OCI-LY7 (cell line): ENCODE measurements at regions of chr2 and their contacts with region 1.

Region 1: DNA sequence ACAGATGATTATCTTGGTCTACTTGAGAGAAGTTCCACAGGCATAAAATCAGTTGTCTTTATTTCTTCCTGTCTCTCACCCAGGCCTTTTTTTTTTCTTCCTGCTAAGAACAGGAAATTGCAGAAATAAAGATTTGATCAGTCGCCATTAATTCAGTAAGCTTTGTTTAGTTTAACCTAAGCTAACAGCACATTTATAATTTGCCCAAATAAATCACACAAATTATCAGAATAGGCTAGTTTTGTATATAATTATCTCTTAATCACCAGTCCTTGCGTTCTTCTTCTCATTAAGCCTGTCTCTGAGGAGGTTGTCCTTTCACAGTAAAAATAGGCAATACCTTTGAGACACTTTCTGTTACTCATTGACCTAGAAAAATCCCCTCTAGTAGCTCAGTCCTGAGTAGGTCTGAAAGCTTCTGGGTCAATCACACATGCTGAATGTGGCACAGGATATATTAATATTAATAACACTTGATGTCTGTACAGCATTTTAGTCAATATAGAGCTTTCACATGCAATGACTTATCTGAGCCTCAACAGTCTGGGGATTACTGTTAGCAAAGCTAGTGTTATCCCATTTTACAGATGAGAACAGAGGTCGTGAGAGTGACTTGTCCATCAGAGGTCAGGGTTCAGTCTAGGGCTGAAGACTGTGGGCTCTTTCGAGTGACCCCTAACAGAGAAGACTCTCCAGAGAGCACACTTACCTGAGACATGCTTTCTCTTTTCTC is 11.2 kb upstream of the STK17B start:
- DNase-seq: peak; percentile 60
- H3K4me3 ChIP-seq: peak overlapping the region; percentile 31
- H3K27ac ChIP-seq: peak overlapping the region; percentile 82
- H3K4me1 ChIP-seq: peaks cover 98% of the 10 kb centered on the region
- CTCF ChIP-seq: no peak

Region 2: DNA sequence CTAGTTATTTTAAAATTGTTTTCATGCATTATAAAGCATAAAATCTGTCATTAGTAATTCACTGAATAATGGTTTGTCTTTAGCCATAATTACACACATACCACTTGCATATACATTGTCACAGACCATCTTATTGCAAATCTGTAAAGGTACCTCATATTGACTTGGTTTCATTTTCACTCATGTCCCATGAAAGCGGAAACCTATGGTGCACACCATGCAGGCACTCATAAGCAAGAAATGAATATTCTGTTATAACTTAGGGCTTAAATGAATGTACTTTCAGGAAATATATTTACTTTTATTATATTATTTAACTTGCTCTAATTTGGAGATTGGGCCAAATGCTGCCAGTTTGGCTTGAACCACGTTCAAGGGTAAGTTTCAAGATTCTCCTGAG is 18.0 kb after region 1 on chr2:
- CTCF ChIA-PET with region 1: interaction called, 3 read pairs
- POLR2A ChIA-PET with region 1: interaction called, 104 read pairs
- intact Hi-C with region 1: no loop called
- DNase-seq: peak; percentile 45
- H3K4me3 ChIP-seq: peak overlapping the region; percentile 42
- H3K27ac ChIP-seq: no peak overlapping the region
- H3K4me1 ChIP-seq: peaks cover 46% of the 10 kb centered on the region
- CTCF ChIP-seq: no peak

Region 3: DNA sequence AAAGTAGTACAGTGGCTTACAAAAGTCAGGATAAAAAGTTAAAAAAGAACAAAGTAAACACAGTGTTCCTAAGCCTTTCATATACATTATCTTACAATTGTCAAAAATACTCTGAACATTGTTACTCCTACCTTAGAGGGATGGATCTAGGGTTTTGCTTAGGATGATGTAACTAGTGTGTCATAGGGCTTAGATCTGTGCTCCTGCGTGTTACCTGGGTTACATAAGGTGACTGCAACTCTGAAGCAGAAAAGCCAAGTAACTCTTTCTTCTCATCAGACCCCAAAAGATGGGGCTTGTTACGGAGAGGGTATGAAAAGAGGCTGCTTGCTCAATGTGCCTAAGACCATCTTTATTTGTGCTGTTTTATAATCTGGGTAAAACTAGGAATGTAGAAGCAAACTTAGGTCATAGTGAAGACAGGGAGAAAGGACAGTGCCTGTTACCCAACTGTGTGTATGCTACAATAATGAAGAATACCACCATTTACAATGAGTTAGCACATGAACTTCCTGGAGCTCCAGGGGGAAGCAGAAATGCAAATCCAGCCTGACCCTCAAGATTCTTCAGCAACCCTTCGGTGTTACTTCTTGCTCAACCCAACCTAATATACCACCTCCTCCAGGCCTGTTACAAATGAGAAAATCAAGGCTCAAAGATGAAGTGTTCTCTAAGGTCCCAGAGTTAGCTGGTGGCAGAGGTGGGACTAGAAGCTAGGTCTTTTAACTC is 30.8 kb after region 1 on chr2:
- CTCF ChIA-PET with region 1: interaction called, 5 read pairs
- POLR2A ChIA-PET with region 1: interaction called, 33 read pairs
- intact Hi-C with region 1: no loop called
- DNase-seq: peak; percentile 30
- H3K4me3 ChIP-seq: no peak overlapping the region
- H3K27ac ChIP-seq: no peak overlapping the region
- H3K4me1 ChIP-seq: peaks cover 50% of the 10 kb centered on the region
- CTCF ChIP-seq: no peak

Region 4: GRCh38 chr2:196239622-196240587 is 57.3 kb after region 1 on chr2:
- CTCF ChIA-PET with region 1: interaction called, 4 read pairs
- POLR2A ChIA-PET with region 1: interaction called, 139 read pairs
- intact Hi-C with region 1: no loop called
- DNase-seq: peak; percentile 96
- H3K4me3 ChIP-seq: peak overlapping the region; percentile 53
- H3K27ac ChIP-seq: peak overlapping the region; percentile 93
- H3K4me1 ChIP-seq: peaks cover 63% of the 10 kb centered on the region
- CTCF ChIP-seq: peak; percentile 37; the same call in 1 of the 2 replicates